SK-N-SH (cell line): ENCODE measurements at regions of chr9 and their contacts with region 1.

Region 1: GRCh38 chr9:127734747-127735529 is at the start of gene TOR2A:
- DNase-seq: peak; percentile 98
- H3K4me3 ChIP-seq: peak within 1 kb of the TSS; percentile 79
- H3K27ac ChIP-seq: peak within 1 kb of the TSS; percentile 62 to 93
- H3K4me1 ChIP-seq: peaks cover 5 to 11% of the 10 kb centered on the region in 2 experiments; a peak in 1 of 4 replicates
- H3K27me3 ChIP-seq: no peaks in the 10 kb centered on the region
- CTCF ChIP-seq: peak; percentile 95
- EP300 ChIP-seq: peak in 1 of 2 experiments; percentile 47; a peak in 1 of 4 replicates
- RAD21 ChIP-seq: peak; percentile 97
- polyA plus RNA-seq, gene TOR2A: 11.9 and 17.2 TPM in 2 replicates

Region 2: DNA sequence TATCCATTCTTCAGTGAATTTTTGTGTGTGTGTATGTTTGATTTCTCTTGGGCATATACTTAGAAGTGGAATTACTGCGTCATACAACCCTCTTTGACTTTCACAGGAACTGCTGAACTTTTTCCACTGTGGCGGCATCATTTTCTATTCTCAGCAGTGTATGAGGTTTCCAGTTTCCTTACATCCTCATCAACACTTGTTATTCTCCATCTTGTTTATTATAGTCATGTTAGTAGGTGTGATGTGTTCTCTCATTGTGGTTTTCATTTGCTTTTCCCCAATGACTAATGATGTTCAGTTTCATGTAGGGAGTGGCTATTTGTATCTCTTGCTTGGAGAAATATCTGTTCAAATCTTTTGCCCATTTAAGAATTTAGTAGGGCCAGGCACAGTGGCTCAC is 308.2 kb before region 1 on chr9:
- CTCF ChIA-PET with region 1: no interaction called
- POLR2A ChIA-PET with region 1: no interaction called
- DNase-seq: no peak
- H3K4me3 ChIP-seq: 0 out of 4 replicates have a peak overlapping the region, but pooled peaks of 1 of the 2 experiments have one; percentile 3
- H3K27ac ChIP-seq: no peak overlapping the region
- H3K4me1 ChIP-seq: peaks cover 7 to 18% of the 10 kb centered on the region in 2 experiments; a peak in 3 of 4 replicates
- H3K27me3 ChIP-seq: no peaks in the 10 kb centered on the region
- CTCF ChIP-seq: no peak
- EP300 ChIP-seq: no peak
- RAD21 ChIP-seq: no peak

Region 3: GRCh38 chr9:127555768-127556397 is 179.1 kb before region 1 on chr9:
- CTCF ChIA-PET with region 1: interaction called, 13 read pairs
- POLR2A ChIA-PET with region 1: no interaction called
- DNase-seq: no peak
- H3K4me3 ChIP-seq: peak overlapping the region in 1 of 2 experiments; percentile 50; a peak in 2 of 4 replicates
- H3K27ac ChIP-seq: peak overlapping the region; percentile 65 to 94
- H3K4me1 ChIP-seq: peaks cover 33 to 59% of the 10 kb centered on the region in 2 experiments; a peak in 3 of 4 replicates
- H3K27me3 ChIP-seq: no peaks in the 10 kb centered on the region
- CTCF ChIP-seq: no peak
- EP300 ChIP-seq: no peak; a peak in 1 of 4 replicates
- RAD21 ChIP-seq: no peak

Region 4: DNA sequence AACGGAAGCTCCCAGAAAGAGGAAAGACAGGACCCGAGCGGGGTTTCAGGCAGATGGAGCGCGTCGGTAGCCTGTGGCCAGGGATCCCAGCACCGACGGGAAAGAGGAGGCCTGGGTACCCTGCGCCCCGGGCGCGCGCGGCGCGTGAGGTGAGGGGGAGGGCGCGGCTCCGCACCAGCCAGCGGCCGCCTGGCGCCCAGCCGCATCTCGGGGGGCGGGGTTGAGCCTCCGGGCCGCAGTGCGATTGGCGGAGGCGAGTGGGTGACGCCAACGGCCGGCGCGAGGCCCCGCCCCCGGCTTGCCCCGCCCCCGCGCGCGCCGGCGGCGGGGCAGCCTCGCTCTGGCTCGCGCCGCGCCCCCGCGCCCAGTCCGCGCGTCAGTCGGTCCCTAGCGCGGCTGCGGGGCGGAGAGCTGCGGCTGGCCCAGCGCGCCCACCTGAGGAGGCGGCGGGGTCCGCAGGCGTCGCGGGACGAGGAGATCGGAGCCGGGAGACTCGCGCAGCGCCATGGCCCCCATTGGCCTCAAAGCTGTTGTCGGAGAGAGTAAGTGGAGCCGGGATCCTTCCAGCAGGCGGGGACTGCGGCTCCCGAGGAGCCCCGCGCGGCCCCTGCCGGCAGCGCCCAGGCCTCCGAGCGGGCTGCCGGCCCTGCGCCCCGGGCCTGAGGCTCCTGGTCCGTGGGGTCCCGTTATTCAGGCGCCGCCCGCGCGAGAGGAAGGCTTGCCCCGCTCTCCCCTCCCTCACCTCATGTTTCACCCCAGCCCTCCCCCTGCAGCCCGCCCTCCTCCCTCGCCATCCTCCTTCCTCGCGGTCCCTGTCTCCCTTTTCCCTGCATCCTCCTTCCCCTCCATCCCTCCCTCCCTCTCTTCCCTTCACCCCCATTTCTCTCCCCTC is 122.8 kb before region 1 on chr9 and contains the start of gene STXBP1:
- CTCF ChIA-PET with region 1: interaction called, 32 read pairs
- POLR2A ChIA-PET with region 1: interaction called, 8 read pairs
- DNase-seq: peak; percentile 98
- H3K4me3 ChIP-seq: peak within 1 kb of the TSS; percentile 83 to 89
- H3K27ac ChIP-seq: peak within 1 kb of the TSS; percentile 57 to 92; a peak in 3 of 4 replicates
- H3K4me1 ChIP-seq: peaks cover 0 to 22% of the 10 kb centered on the region in 2 experiments; a peak in 2 of 4 replicates
- H3K27me3 ChIP-seq: no peaks in the 10 kb centered on the region
- CTCF ChIP-seq: 0 out of 2 replicates have a peak, but pooled peaks have one; percentile 17
- EP300 ChIP-seq: no peak
- RAD21 ChIP-seq: no peak
- polyA plus RNA-seq, gene STXBP1: 33.0 and 44.3 TPM in 2 replicates

Region 5: GRCh38 chr9:127723450-127723849 is 11.5 kb before region 1 on chr9:
- CTCF ChIA-PET with region 1: interaction called, 17 read pairs
- POLR2A ChIA-PET with region 1: interaction called, 3 read pairs
- DNase-seq: no peak
- H3K4me3 ChIP-seq: no peak overlapping the region
- H3K27ac ChIP-seq: no peak overlapping the region
- H3K4me1 ChIP-seq: peaks cover 0 to 8% of the 10 kb centered on the region in 2 experiments; a peak in 1 of 4 replicates
- H3K27me3 ChIP-seq: no peaks in the 10 kb centered on the region
- CTCF ChIP-seq: no peak
- EP300 ChIP-seq: no peak
- RAD21 ChIP-seq: no peak

Region 6: DNA sequence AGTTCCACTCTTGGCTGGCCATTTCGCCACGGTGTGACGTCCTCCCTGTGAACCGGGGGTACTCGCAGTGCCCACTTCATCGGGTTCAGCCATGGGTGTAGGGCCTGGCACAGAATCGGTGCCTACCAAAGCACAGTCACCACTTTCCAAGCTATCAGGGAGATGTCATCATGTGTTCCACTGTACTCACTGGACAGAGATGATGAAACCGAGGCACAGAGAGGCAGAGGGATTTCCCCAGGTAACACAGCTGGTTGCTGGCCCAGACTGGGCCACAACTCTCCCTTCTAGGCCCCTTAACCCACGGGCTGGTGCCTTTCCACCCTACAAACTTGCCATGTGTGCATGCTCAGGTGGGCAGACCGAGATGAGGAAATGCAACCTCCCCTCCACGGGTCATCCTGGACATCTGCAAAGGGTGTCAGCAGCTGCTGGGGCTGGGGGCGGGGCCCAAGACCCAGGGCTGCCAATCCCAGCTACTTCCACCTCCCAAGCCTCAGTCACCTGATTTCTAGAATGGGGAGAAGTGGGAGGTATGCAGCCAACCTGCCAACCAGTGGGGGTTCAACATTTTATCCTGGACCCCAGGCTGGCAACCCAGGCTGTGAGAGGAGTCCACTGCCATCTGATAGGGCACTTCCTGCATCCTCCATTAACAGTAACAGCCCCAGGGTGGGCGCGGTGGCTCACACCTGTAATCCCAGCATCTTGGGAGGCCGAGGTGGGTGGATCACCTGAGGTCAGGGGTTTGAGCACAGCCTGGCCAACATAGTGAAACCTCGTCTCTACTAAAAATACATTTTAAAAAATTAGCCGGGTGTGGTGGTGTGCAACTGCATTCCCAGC is 44.4 kb after region 1 on chr9:
- CTCF ChIA-PET with region 1: interaction called, 38 read pairs
- POLR2A ChIA-PET with region 1: interaction called, 4 read pairs
- DNase-seq: peak; percentile 41
- H3K4me3 ChIP-seq: no peak overlapping the region
- H3K27ac ChIP-seq: no peak overlapping the region; a peak in 1 of 4 replicates
- H3K4me1 ChIP-seq: peaks cover 0 to 18% of the 10 kb centered on the region in 2 experiments; a peak in 1 of 4 replicates
- H3K27me3 ChIP-seq: no peaks in the 10 kb centered on the region
- CTCF ChIP-seq: no peak
- EP300 ChIP-seq: no peak
- RAD21 ChIP-seq: no peak

Region 7: DNA sequence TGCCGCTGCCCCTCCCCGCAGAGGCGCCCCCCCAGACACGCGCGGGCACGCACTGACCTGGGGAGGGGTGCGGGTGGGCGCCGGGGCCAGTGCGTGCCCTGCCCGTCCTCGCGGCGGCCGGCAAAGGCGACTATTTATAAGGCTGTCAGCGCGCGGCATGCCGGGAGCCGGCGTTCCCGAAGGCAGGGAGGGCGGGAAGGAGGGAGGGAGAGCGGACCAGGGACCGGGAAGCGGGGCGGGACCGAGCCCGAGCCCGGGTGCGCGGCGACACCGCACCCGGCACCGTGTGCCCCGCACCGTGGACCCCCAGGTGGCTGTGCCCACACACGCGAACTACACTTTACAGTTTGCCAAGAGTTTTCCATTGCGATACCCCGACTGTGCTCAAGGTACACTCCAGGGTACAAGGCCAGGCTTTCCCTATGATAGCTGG is 142.6 kb after region 1 on chr9 and contains the start of gene AK1:
- CTCF ChIA-PET with region 1: interaction called, 63 read pairs
- POLR2A ChIA-PET with region 1: no interaction called
- DNase-seq: peak; percentile 91
- H3K4me3 ChIP-seq: peak within 1 kb of the TSS; percentile 52 to 71
- H3K27ac ChIP-seq: peak within 1 kb of the TSS in 1 of 2 experiments; percentile 59; a peak in 1 of 4 replicates
- H3K4me1 ChIP-seq: peaks cover 9 to 39% of the 10 kb centered on the region in 2 experiments; a peak in 2 of 4 replicates
- H3K27me3 ChIP-seq: no peaks in the 10 kb centered on the region
- CTCF ChIP-seq: no peak
- EP300 ChIP-seq: no peak
- RAD21 ChIP-seq: no peak
- polyA plus RNA-seq, gene AK1: 103 and 125 TPM in 2 replicates